Naive thymus-derived CD4-positive, alpha-beta T cell (primary cell): ENCODE measurements at regions of chr6 and their contacts with region 1.

Region 1: GRCh38 chr6:162727309-162728182 is at the starts of genes PACRG and PRKN:
- DNase-seq: peak; percentile 97 to 99 (median 97)
- ATAC-seq: peak; percentile 95
- H3K4me3 ChIP-seq: peak within 1 kb of the TSS; percentile 72
- H3K4me3 Mint-ChIP-seq: peak within 1 kb of the TSS; percentile 92 to 98 (median 96)
- H3K27ac ChIP-seq: peak within 1 kb of the TSS; percentile 90
- H3K27ac Mint-ChIP-seq: peak within 1 kb of the TSS; percentile 88 to 99 (median 97)
- H3K4me1 ChIP-seq: no peaks in the 10 kb centered on the region
- H3K4me1 Mint-ChIP-seq: peaks cover 6 to 20% (median 14%) of the 10 kb centered on the region in 7 donors
- H3K27me3 ChIP-seq: no peaks in the 10 kb centered on the region
- H3K27me3 Mint-ChIP-seq: peaks cover 0 to 13% (median 0%) of the 10 kb centered on the region in 5 donors
- total RNA-seq, gene PACRG: 0.89 to 1.7 (median 1.4) TPM in 4 of 5 experiments, not detected in the other
- total RNA-seq, gene PRKN: 0.44 to 9.0 (median 8.1) TPM

Region 2: DNA sequence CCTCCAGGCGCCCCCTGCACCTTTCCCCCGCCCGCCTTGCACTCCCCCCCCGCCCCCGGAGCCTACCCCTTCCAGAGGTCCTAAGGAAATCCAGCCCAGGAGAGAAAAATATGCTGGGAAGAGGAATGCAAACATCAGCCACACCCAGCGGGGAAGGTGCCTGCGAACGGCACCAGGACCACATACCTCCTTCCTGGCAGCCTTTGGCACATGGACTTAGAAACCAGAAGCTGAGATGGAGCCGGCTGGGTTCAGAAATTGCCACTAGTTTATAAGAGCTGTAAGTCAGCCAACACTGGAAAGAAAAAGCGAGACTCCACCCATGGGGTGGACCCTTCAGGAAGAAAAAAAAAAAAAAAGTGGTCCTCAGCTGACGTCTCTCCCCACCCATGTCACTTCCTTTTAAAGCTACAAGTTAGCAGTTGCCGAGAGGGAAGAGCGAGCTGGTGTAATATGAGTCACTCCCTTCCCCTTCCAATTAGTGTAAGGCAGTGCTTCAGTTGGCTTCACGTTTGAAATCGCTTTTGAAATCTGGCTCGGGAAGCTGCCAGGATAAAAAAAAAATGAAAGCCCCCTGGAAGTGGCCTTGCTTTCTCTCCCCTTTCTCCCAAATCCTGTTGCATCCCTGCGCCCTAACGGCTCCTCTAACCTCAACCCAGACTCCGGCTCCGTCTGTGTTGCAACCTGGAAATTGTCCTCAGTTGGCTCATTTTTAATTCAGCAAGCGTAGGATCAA is 1453.6 kb before region 1 on chr6 and contains the start of gene AGPAT4:
- CTCF ChIA-PET with region 1: no interaction called
- POLR2A ChIA-PET with region 1: no interaction called
- intact Hi-C with region 1: loop called (anchors 1 kb)
- DNase-seq: peak; percentile 31 to 85 (median 78)
- ATAC-seq: peak; percentile 96
- H3K4me3 ChIP-seq: peak within 1 kb of the TSS; percentile 46
- H3K4me3 Mint-ChIP-seq: peak within 1 kb of the TSS; percentile 82 to 98 (median 94)
- H3K27ac ChIP-seq: peak within 1 kb of the TSS; percentile 66
- H3K27ac Mint-ChIP-seq: peak within 1 kb of the TSS; percentile 87 to 98 (median 94)
- H3K4me1 ChIP-seq: peaks cover 0 to 6% of the 10 kb centered on the region in 2 donors
- H3K4me1 Mint-ChIP-seq: peaks cover 10 to 31% (median 19%) of the 10 kb centered on the region in 7 donors
- H3K27me3 ChIP-seq: no peaks in the 10 kb centered on the region
- H3K27me3 Mint-ChIP-seq: peaks cover 0 to 15% (median 0%) of the 10 kb centered on the region in 5 donors
- total RNA-seq, gene AGPAT4: 2.0 to 16.2 (median 4.4) TPM

Region 3: GRCh38 chr6:161393839-161394364 is 1333.6 kb before region 1 on chr6:
- CTCF ChIA-PET with region 1: interaction called, 4 read pairs
- POLR2A ChIA-PET with region 1: no interaction called
- intact Hi-C with region 1: loop called in 1 of 2 experiments (anchors 5 kb)
- DNase-seq: peak in 8 of 9 donors; percentile 18 to 46 (median 30)
- ATAC-seq: peak; percentile 96
- H3K4me3 ChIP-seq: no peak overlapping the region
- H3K4me3 Mint-ChIP-seq: no peak overlapping the region
- H3K27ac ChIP-seq: no peak overlapping the region
- H3K27ac Mint-ChIP-seq: no peak overlapping the region
- H3K4me1 ChIP-seq: peaks cover 6% of the 10 kb centered on the region in 2 donors
- H3K4me1 Mint-ChIP-seq: no peaks in the 10 kb centered on the region
- H3K27me3 ChIP-seq: no peaks in the 10 kb centered on the region
- H3K27me3 Mint-ChIP-seq: peaks cover 0 to 19% (median 0%) of the 10 kb centered on the region in 5 donors

Region 4: DNA sequence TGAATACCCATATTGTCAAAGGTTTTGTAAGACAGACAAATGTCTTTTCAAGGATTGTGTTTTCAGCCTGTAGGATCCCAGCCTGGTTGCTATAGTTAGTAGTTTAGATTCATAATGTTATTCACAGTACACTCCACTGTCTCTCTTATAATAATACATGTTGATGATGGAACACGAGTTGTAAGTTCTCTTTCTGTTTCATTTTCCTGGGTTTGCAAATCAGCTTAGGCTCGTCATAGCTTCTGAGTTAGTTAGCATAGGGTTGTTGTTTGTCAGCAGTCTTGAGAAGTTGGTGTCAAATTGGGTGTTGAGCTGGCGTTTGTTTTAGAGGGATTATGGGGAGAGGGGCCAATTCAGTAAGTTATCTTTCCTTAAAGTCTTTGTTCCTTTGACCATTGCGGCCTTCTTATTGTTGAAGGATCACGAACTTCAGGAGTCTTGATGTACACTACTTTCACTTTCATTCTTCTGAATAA is 732.8 kb after region 1 on chr6:
- CTCF ChIA-PET with region 1: no interaction called
- POLR2A ChIA-PET with region 1: no interaction called
- intact Hi-C with region 1: loop called in 1 of 2 experiments (anchors 1 kb)
- DNase-seq: peak in 7 of 9 donors; percentile 27 to 68 (median 60)
- ATAC-seq: peak; percentile 83
- H3K4me3 ChIP-seq: peak overlapping the region; percentile 55
- H3K4me3 Mint-ChIP-seq: peak overlapping the region; percentile 79 to 100 (median 96)
- H3K27ac ChIP-seq: peak overlapping the region; percentile 74
- H3K27ac Mint-ChIP-seq: peak overlapping the region; percentile 97 to 100 (median 99)
- H3K4me1 ChIP-seq: peaks cover 14 to 28% of the 10 kb centered on the region in 2 donors
- H3K4me1 Mint-ChIP-seq: peaks cover 32 to 82% (median 60%) of the 10 kb centered on the region in 7 donors
- H3K27me3 ChIP-seq: no peaks in the 10 kb centered on the region
- H3K27me3 Mint-ChIP-seq: no peaks in the 10 kb centered on the region

Region 5: GRCh38 chr6:163543321-163543720 is 815.8 kb after region 1 on chr6:
- CTCF ChIA-PET with region 1: no interaction called
- POLR2A ChIA-PET with region 1: no interaction called
- intact Hi-C with region 1: loop called in 1 of 2 experiments (anchors 10 kb)
- DNase-seq: no peak
- ATAC-seq: no peak
- H3K4me3 ChIP-seq: no peak overlapping the region
- H3K4me3 Mint-ChIP-seq: no peak overlapping the region
- H3K27ac ChIP-seq: no peak overlapping the region
- H3K27ac Mint-ChIP-seq: no peak overlapping the region
- H3K4me1 ChIP-seq: no peaks in the 10 kb centered on the region
- H3K4me1 Mint-ChIP-seq: peaks cover 2 to 46% (median 17%) of the 10 kb centered on the region in 7 donors
- H3K27me3 ChIP-seq: no peaks in the 10 kb centered on the region
- H3K27me3 Mint-ChIP-seq: no peaks in the 10 kb centered on the region